Endothelial cell of umbilical vein (primary cell): ENCODE measurements at regions of chrX and their contacts with region 1.

Region 1: GRCh38 chrX:150365051-150365989 is 2.2 kb downstream of the MAMLD1 start:
- DNase-seq: peak; percentile 62
- H3K4me3 ChIP-seq: peak overlapping the region; percentile 46 to 78 (median 66)
- H3K27ac ChIP-seq: peak overlapping the region; percentile 58
- H3K4me1 ChIP-seq: peaks cover 13% of the 10 kb centered on the region
- H3K27me3 ChIP-seq: peaks cover 15% of the 10 kb centered on the region in 2 experiments
- CTCF ChIP-seq: peak; percentile 53 to 71
- POLR2A ChIP-seq: no peak

Region 2: GRCh38 chrX:149950681-149951080 is 414.6 kb before region 1 on chrX:
- CTCF ChIA-PET with region 1: interaction called, 17 read pairs
- POLR2A ChIA-PET with region 1: no interaction called
- dilution Hi-C with region 1: no loop called
- intact Hi-C with region 1: loop called (anchors 1 kb)
- DNase-seq: peak; percentile 62
- H3K4me3 ChIP-seq: no peak overlapping the region
- H3K27ac ChIP-seq: no peak overlapping the region
- H3K4me1 ChIP-seq: no peaks in the 10 kb centered on the region
- H3K27me3 ChIP-seq: no peaks in the 10 kb centered on the region
- CTCF ChIP-seq: peak; percentile 22 to 25
- POLR2A ChIP-seq: no peak

Region 3: GRCh38 chrX:150084496-150085229 is 280.7 kb before region 1 on chrX:
- CTCF ChIA-PET with region 1: no interaction called
- POLR2A ChIA-PET with region 1: no interaction called
- dilution Hi-C with region 1: no loop called
- intact Hi-C with region 1: loop called (anchors 10 kb)
- DNase-seq: peak; percentile 81
- H3K4me3 ChIP-seq: no peak overlapping the region
- H3K27ac ChIP-seq: peak overlapping the region; percentile 90
- H3K4me1 ChIP-seq: peaks cover 27% of the 10 kb centered on the region
- H3K27me3 ChIP-seq: no peaks in the 10 kb centered on the region
- CTCF ChIP-seq: no peak
- POLR2A ChIP-seq: no peak

Region 4: GRCh38 chrX:150308532-150309157 is 56.7 kb before region 1 on chrX:
- CTCF ChIA-PET with region 1: no interaction called
- POLR2A ChIA-PET with region 1: no interaction called
- dilution Hi-C with region 1: no loop called
- intact Hi-C with region 1: no loop called
- DNase-seq: no peak
- H3K4me3 ChIP-seq: no peak overlapping the region
- H3K27ac ChIP-seq: no peak overlapping the region
- H3K4me1 ChIP-seq: no peaks in the 10 kb centered on the region
- H3K27me3 ChIP-seq: no peaks in the 10 kb centered on the region
- CTCF ChIP-seq: no peak
- POLR2A ChIP-seq: no peak

Region 5: DNA sequence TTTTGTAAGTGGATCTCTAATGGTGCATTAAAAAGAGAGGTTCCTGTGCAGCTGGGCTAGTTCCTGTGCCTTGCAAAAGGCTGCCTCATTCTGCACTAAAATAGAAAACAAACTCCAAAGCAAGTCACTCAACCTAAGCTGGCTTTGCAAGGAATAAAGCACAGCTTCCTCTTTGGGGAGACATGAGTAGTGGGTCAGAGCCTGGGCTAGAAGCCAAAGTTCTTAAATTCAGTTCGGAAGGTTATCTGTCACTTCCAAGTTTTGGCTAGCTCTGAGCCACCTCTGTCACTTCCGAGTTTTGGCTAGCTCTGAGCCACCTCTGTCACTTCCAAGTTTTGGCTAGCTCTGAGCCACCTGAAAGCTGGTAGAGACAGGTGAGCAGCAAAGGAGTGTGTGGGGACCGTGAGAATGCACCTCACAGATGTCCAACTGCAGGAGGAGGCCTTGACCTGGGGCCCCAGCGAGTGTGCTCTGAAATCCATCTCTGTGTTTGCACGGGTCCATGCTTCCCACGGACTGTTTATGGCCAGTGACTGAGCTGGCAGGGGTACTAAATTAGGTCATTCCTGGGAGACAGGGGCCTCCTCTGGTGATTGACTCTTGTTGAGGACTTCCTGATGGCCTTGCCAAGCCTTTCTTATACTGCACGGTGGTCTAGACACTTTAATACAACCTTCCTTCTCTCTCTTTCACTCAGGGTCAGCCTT is 38.6 kb before region 1 on chrX:
- CTCF ChIA-PET with region 1: no interaction called
- POLR2A ChIA-PET with region 1: no interaction called
- dilution Hi-C with region 1: no loop called
- intact Hi-C with region 1: loop called (anchors 1 kb)
- DNase-seq: peak; percentile 1
- H3K4me3 ChIP-seq: no peak overlapping the region
- H3K27ac ChIP-seq: no peak overlapping the region
- H3K4me1 ChIP-seq: peaks cover 31% of the 10 kb centered on the region
- H3K27me3 ChIP-seq: no peaks in the 10 kb centered on the region
- CTCF ChIP-seq: no peak
- POLR2A ChIP-seq: no peak

Region 6: GRCh38 chrX:150508451-150509367 is 143.4 kb after region 1 on chrX:
- CTCF ChIA-PET with region 1: no interaction called
- POLR2A ChIA-PET with region 1: no interaction called
- dilution Hi-C with region 1: no loop called
- intact Hi-C with region 1: loop called (anchors 1 kb)
- DNase-seq: peak; percentile 61
- H3K4me3 ChIP-seq: no peak overlapping the region
- H3K27ac ChIP-seq: peak overlapping the region; percentile 89
- H3K4me1 ChIP-seq: peaks cover 56% of the 10 kb centered on the region
- H3K27me3 ChIP-seq: no peaks in the 10 kb centered on the region
- CTCF ChIP-seq: no peak
- POLR2A ChIP-seq: no peak

Region 7: GRCh38 chrX:150649096-150649870 is 284.0 kb after region 1 on chrX:
- CTCF ChIA-PET with region 1: no interaction called
- POLR2A ChIA-PET with region 1: no interaction called
- dilution Hi-C with region 1: no loop called
- intact Hi-C with region 1: loop called (anchors 2 kb)
- DNase-seq: peak; percentile 82
- H3K4me3 ChIP-seq: peak overlapping the region in 1 of 3 experiments; percentile 9
- H3K27ac ChIP-seq: peak overlapping the region; percentile 85
- H3K4me1 ChIP-seq: peaks cover 38% of the 10 kb centered on the region
- H3K27me3 ChIP-seq: no peaks in the 10 kb centered on the region
- CTCF ChIP-seq: no peak
- POLR2A ChIP-seq: no peak